ENCODE measurements at regions of chr7 and their contacts with region 1.

Region 1: DNA sequence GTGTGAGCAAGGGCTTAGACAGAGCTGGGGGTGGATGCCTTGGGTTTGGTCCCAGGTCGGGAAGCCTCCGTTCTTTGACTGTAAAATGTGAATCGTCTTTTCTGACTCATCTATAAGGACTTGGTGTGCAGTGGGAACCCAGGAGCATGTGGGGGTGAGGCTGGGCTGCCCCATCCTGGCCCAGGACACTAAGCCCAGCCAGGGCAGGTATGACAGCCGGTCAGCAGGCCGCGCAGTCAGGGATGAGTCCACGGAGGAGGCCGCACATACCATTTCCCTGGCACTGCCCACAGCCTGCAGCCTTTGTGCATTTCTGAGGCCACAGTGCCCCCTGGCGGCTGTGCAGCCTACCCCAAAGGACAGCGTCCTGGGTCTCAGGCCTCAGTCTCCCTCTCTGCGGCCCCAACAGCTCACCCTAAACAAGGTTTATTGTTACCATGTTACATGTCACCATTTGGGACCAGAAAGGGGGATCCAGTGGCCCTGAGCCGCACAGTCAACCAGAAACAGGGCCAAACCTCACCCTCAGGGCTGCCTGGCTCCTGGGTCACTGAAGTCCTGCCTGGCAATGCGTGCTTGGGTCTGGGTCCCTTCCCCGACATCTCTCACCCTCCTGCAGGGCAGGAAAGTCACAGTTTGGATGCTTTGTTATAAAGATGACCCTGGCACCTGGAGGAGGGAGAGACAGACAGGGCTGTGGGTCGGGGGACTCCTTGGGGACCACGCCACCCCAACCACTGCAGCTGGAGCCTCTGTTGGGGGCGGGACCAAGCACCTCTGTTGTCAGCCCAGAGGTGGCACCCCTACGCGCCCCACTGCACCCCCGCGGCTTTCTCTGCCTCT is 14.4 kb upstream of the SH2B2 start:
- DNase-seq: peak; percentile 50 to 77 (median 68)
- H3K4me3 ChIP-seq: no peak overlapping the region
- H3K4me3 Mint-ChIP-seq: no peak overlapping the region
- H3K27ac ChIP-seq: no peak overlapping the region
- H3K27ac Mint-ChIP-seq: no peak overlapping the region
- H3K4me1 ChIP-seq: no peaks in the 10 kb centered on the region
- H3K4me1 Mint-ChIP-seq: peaks cover 0 to 2% (median 2%) of the 10 kb centered on the region in 3 donors
- H3K27me3 ChIP-seq: no peaks in the 10 kb centered on the region
- H3K27me3 Mint-ChIP-seq: no peaks in the 10 kb centered on the region

Region 2: GRCh38 chr7:101542527-101543241 is 729.6 kb before region 1 on chr7:
- CTCF ChIA-PET with region 1: interaction called, 56 read pairs
- POLR2A ChIA-PET with region 1: no interaction called
- DNase-seq: peak; percentile 36 to 76 (median 62)
- H3K4me3 ChIP-seq: no peak overlapping the region
- H3K4me3 Mint-ChIP-seq: no peak overlapping the region
- H3K27ac ChIP-seq: no peak overlapping the region
- H3K27ac Mint-ChIP-seq: peak overlapping the region in 2 of 8 donors; percentile 20 to 77
- H3K4me1 ChIP-seq: no peaks in the 10 kb centered on the region
- H3K4me1 Mint-ChIP-seq: peaks cover 0 to 5% (median 3%) of the 10 kb centered on the region in 3 donors
- H3K27me3 ChIP-seq: no peaks in the 10 kb centered on the region
- H3K27me3 Mint-ChIP-seq: peaks cover 3 to 5% of the 10 kb centered on the region in 2 donors

Region 3: GRCh38 chr7:101602484-101603241 is 669.6 kb before region 1 on chr7:
- CTCF ChIA-PET with region 1: interaction called, 15 read pairs
- POLR2A ChIA-PET with region 1: no interaction called
- DNase-seq: peak; percentile 34 to 68 (median 52)
- H3K4me3 ChIP-seq: no peak overlapping the region
- H3K4me3 Mint-ChIP-seq: no peak overlapping the region
- H3K27ac ChIP-seq: no peak overlapping the region
- H3K27ac Mint-ChIP-seq: no peak overlapping the region
- H3K4me1 ChIP-seq: no peaks in the 10 kb centered on the region
- H3K4me1 Mint-ChIP-seq: no peaks in the 10 kb centered on the region
- H3K27me3 ChIP-seq: no peaks in the 10 kb centered on the region
- H3K27me3 Mint-ChIP-seq: peaks cover 0 to 3% of the 10 kb centered on the region in 2 donors

Region 4: DNA sequence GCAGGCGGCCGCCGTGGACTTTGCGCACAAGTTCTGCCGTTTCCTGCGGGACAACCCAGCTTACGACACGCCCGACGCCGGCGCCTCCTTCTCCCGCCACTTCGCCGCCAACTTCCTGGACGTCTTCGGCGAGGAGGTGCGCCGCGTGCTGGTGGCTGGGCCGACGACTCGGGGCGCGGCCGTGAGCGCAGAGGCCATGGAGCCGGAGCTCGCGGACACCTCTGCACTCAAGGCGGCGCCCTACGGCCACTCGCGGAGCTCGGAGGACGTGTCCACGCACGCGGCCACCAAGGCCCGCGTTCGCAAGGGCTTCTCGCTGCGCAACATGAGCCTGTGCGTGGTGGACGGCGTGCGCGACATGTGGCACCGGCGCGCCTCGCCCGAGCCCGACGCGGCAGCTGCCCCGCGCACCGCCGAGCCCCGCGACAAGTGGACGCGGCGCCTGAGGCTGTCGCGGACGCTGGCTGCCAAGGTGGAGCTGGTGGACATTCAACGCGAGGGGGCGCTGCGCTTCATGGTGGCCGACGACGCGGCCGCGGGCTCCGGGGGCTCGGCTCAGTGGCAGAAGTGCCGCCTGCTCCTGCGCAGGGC is 28.4 kb after region 1 on chr7:
- CTCF ChIA-PET with region 1: no interaction called
- POLR2A ChIA-PET with region 1: no interaction called
- DNase-seq: no peak
- H3K4me3 ChIP-seq: no peak overlapping the region
- H3K4me3 Mint-ChIP-seq: no peak overlapping the region
- H3K27ac ChIP-seq: no peak overlapping the region
- H3K27ac Mint-ChIP-seq: no peak overlapping the region
- H3K4me1 ChIP-seq: no peaks in the 10 kb centered on the region
- H3K4me1 Mint-ChIP-seq: peaks cover 5 to 12% (median 8%) of the 10 kb centered on the region in 3 donors
- H3K27me3 ChIP-seq: no peaks in the 10 kb centered on the region
- H3K27me3 Mint-ChIP-seq: peaks cover 0 to 1% of the 10 kb centered on the region in 2 donors